ENCODE measurements at regions of chr19 and their contacts with region 1.

Region 1: DNA sequence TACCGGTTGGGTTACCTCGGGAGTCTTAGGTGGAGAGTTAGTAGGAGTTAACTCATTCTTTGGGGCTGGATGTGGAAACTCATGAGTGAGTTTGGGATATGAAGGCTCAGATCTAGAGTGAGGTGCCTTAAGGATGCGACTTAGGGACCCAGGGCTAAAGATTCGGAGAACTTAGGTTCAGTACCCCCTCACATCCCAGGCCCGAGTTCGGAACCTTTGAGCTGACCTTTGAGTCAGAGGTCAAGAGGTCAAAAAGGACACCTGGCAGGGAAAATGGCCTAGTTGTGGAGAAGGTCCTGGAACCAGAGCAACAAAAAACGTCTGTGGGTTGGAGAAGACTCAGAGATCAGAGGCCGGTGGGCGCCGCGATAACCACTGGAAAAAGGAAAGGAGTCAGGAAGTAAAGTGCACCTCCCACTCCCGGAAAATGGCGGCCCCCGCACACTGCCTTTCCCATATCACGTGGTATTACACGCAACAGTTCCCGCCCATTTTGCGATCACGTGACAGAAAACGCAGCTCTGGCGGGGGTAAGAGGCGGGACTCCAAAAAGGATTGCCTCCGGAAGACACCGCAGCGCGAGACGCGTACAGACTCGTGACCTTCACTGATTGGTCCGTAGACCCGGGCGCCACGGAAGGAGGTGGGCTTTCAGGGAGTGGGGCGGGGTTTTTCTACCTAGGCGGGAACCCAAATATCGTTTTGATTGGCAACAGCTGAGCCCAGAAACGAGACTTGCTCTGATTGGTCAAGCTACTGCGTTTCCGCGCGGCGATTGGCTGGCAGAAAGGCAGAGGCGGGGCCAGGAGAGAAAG is at the start of gene ACTMAP:
- DNase-seq: peak; percentile 98 to 100 (median 99)
- ATAC-seq: peak; percentile 87
- H3K4me3 ChIP-seq: peak within 1 kb of the TSS; percentile 75 to 87
- H3K4me3 Mint-ChIP-seq: peak within 1 kb of the TSS; percentile 93
- H3K27ac ChIP-seq: peak within 1 kb of the TSS; percentile 91 to 95
- H3K27ac Mint-ChIP-seq: peak within 1 kb of the TSS; percentile 98
- H3K4me1 ChIP-seq: peaks cover 36% of the 10 kb centered on the region
- H3K4me1 Mint-ChIP-seq: peaks cover 38% of the 10 kb centered on the region
- H3K27me3 ChIP-seq: no peaks in the 10 kb centered on the region
- H3K27me3 Mint-ChIP-seq: no peaks in the 10 kb centered on the region
- CTCF ChIP-seq: no peak
- total RNA-seq, gene ACTMAP: 3.5 to 3.8 TPM

Region 2: DNA sequence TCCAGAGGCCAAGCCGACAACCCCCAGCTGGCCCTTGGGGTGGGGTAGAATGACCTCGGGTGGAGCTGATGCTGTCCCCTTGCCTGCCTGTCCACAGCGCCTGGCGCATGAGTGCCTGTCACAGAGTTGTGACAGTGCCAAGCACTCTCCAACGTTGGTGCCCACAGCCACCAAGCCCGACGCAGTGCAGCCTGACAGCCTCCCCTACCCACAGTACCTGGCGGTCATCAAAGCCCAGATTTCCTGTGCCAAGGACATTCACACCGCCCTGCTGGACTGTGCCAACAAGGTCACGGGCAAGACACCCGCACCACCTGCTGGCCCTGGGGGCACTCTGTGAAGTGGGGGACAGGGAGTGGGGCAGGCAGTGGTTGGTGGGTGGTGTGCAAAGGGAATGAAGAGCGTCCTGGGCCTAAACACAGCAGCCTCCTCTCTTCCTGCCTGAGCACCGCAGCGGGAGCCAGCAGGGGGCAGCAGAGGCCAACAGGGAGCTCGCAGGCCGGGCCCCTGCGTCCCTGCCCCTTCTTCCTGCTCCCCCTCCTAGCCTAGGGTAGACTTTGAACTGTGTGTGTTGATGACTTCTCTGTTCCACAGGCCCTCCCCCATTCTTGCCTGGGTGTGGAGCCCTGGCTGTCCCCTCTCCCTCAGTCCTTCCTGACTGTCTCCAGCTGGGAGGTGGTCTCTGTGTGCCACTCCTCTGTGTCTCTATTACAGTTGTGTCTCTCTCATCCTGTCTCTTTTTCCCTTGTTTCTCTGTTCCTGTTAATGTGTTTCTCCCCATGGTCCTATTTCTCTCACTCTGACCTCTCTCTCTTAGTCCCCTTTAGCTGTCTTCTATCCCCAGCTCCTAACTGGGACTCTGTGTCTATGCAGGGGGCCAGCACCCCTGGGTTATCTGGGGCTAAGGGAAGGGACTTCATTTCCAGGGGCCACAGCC is 1352.6 kb before region 1 on chr19:
- CTCF ChIA-PET with region 1: no interaction called
- POLR2A ChIA-PET with region 1: no interaction called
- intact Hi-C with region 1: loop called in 1 of 2 experiments (anchors 2 kb)
- DNase-seq: peak; percentile 88 to 98 (median 94)
- ATAC-seq: peak; percentile 41
- H3K4me3 ChIP-seq: peak overlapping the region; percentile 12 to 18
- H3K4me3 Mint-ChIP-seq: peak overlapping the region; percentile 71
- H3K27ac ChIP-seq: peak overlapping the region; percentile 33 to 92
- H3K27ac Mint-ChIP-seq: peak overlapping the region; percentile 96
- H3K4me1 ChIP-seq: peaks cover 51% of the 10 kb centered on the region
- H3K4me1 Mint-ChIP-seq: peaks cover 56% of the 10 kb centered on the region
- H3K27me3 ChIP-seq: no peaks in the 10 kb centered on the region
- H3K27me3 Mint-ChIP-seq: no peaks in the 10 kb centered on the region
- CTCF ChIP-seq: peak; percentile 94

Region 3: GRCh38 chr19:40609561-40610395 is 140.5 kb before region 1 on chr19:
- CTCF ChIA-PET with region 1: no interaction called
- POLR2A ChIA-PET with region 1: no interaction called
- intact Hi-C with region 1: no loop called
- DNase-seq: peak; percentile 71 to 90 (median 84)
- ATAC-seq: peak; percentile 35
- H3K4me3 ChIP-seq: peak overlapping the region; percentile 50 to 56
- H3K4me3 Mint-ChIP-seq: peak overlapping the region; percentile 78
- H3K27ac ChIP-seq: peak overlapping the region; percentile 72 to 89
- H3K27ac Mint-ChIP-seq: peak overlapping the region; percentile 94
- H3K4me1 ChIP-seq: peaks cover 44% of the 10 kb centered on the region
- H3K4me1 Mint-ChIP-seq: peaks cover 68% of the 10 kb centered on the region
- H3K27me3 ChIP-seq: no peaks in the 10 kb centered on the region
- H3K27me3 Mint-ChIP-seq: no peaks in the 10 kb centered on the region
- CTCF ChIP-seq: no peak

Region 4: DNA sequence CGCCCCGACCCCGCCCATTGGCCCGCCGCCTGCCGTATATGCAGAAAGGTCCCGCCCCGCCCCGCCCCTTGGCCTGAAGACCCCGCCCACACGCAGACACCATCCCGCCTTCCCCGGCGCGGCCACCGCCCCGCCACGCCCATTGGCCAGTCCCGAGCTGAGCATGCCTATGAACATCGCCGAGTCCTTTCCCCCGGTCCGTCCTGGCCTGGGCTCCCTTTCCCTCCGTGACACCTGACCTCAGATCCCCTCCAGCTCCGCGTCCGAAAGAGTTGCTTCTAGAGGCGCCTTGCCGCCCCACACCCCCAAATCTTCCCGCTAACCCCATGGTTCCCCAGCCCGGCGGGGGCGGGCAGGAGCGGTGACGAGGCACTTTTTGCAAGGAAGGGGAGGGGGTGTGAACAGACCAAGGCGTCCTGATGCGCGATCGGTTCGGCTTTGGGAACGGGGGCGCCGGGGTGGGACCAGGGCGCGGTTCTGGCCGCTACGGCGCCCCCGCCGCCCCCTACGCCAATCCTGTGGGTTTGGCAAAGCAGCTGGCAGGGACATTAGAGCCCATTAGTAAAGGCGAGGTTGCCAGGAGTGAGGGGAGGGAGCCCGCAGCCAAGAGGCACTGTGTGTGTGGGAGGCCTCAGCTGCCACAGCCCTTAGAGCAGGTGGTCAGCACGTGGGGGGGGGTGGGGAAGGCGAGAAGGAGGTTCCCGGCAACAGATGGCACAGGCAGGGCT is 59.4 kb before region 1 on chr19:
- CTCF ChIA-PET with region 1: interaction called, 3 read pairs
- POLR2A ChIA-PET with region 1: interaction called, 4 read pairs
- intact Hi-C with region 1: loop called in 1 of 2 experiments (anchors 1 kb)
- DNase-seq: peak; percentile 67 to 93 (median 85)
- ATAC-seq: peak; percentile 88
- H3K4me3 ChIP-seq: peak overlapping the region; percentile 65 to 76
- H3K4me3 Mint-ChIP-seq: peak overlapping the region; percentile 88
- H3K27ac ChIP-seq: peak overlapping the region in 1 of 2 experiments; percentile 40
- H3K27ac Mint-ChIP-seq: peak overlapping the region; percentile 75
- H3K4me1 ChIP-seq: peaks cover 23% of the 10 kb centered on the region
- H3K4me1 Mint-ChIP-seq: peaks cover 7% of the 10 kb centered on the region
- H3K27me3 ChIP-seq: peaks cover 0 to 3% of the 10 kb centered on the region in 2 experiments
- H3K27me3 Mint-ChIP-seq: no peaks in the 10 kb centered on the region
- CTCF ChIP-seq: no peak

Region 5: GRCh38 chr19:40777937-40778705 is 27.9 kb after region 1 on chr19 and contains the start of gene RAB4B:
- CTCF ChIA-PET with region 1: interaction called, 9 read pairs
- POLR2A ChIA-PET with region 1: interaction called, 45 read pairs
- intact Hi-C with region 1: loop called (anchors 1 kb)
- DNase-seq: peak; percentile 100
- ATAC-seq: peak; percentile 83
- H3K4me3 ChIP-seq: peak within 1 kb of the TSS; percentile 87 to 89
- H3K4me3 Mint-ChIP-seq: peak within 1 kb of the TSS; percentile 92
- H3K27ac ChIP-seq: peak within 1 kb of the TSS; percentile 93 to 98
- H3K27ac Mint-ChIP-seq: peak within 1 kb of the TSS; percentile 95
- H3K4me1 ChIP-seq: peaks cover 26% of the 10 kb centered on the region
- H3K4me1 Mint-ChIP-seq: peaks cover 37% of the 10 kb centered on the region
- H3K27me3 ChIP-seq: no peaks in the 10 kb centered on the region
- H3K27me3 Mint-ChIP-seq: no peaks in the 10 kb centered on the region
- CTCF ChIP-seq: no peak
- total RNA-seq, gene RAB4B: 19.9 to 21.3 TPM

Region 6: DNA sequence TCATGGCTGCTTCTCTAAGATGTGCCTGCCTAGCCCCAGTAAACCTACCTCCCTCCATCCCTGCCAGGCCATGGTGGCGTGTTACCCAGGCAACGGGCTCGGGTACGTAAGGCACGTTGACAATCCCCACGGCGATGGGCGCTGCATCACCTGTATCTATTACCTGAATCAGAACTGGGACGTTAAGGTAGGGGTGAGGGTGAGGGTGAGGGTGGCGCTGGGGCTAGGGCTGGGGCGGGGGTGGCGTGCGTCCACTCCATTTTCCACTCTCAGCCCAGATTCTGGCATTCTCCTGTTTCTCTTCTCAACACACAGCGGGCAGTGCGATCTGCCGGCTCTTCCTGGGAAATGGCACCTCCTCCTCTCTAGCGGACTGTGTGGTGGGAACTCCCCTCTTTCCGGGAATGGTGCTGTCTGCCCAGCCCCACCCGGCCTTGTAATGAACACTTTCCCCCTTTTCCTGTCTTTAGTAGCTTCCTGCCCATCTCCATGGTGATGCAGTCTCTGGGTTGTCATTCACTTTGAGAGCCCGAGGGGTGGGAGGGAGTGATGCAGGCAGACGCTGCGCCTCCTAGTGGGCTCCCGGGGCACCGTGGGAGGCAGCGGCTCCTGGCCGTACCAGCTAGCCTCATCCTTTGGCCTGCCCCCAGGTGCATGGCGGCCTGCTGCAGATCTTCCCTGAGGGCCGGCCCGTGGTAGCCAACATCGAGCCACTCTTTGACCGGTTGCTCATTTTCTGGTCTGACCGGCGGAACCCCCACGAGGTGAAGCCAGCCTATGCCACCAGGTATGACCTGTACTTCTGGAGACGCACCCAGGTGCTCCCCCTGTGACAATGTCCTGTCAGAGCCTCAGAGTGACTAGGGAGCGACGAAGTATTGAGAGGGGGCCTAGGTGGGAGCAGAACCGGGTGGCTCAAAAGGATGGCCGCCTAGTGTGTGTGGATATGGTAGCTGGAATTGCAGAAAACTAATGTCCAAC is 56.5 kb after region 1 on chr19:
- CTCF ChIA-PET with region 1: interaction called, 37 read pairs
- POLR2A ChIA-PET with region 1: interaction called, 8 read pairs
- intact Hi-C with region 1: loop called (anchors 1 to 2 kb)
- DNase-seq: peak; percentile 54 to 95 (median 81)
- ATAC-seq: peak; percentile 48
- H3K4me3 ChIP-seq: peak overlapping the region in 1 of 2 experiments; percentile 35
- H3K4me3 Mint-ChIP-seq: peak overlapping the region; percentile 83
- H3K27ac ChIP-seq: peak overlapping the region; percentile 66 to 88
- H3K27ac Mint-ChIP-seq: peak overlapping the region; percentile 99
- H3K4me1 ChIP-seq: peaks cover 86% of the 10 kb centered on the region
- H3K4me1 Mint-ChIP-seq: peaks cover 87% of the 10 kb centered on the region
- H3K27me3 ChIP-seq: no peaks in the 10 kb centered on the region
- H3K27me3 Mint-ChIP-seq: no peaks in the 10 kb centered on the region
- CTCF ChIP-seq: peak; percentile 87

Region 7: GRCh38 chr19:41397086-41398049 is 647.1 kb after region 1 on chr19 and contains the starts of genes BCKDHA and EXOSC5:
- CTCF ChIA-PET with region 1: no interaction called
- POLR2A ChIA-PET with region 1: no interaction called
- intact Hi-C with region 1: loop called in 1 of 2 experiments (anchors 1 kb)
- DNase-seq: peak; percentile 97 to 100 (median 99)
- ATAC-seq: peak; percentile 97
- H3K4me3 ChIP-seq: peak within 1 kb of the TSS; percentile 84 to 97
- H3K4me3 Mint-ChIP-seq: peak within 1 kb of the TSS; percentile 98
- H3K27ac ChIP-seq: peak within 1 kb of the TSS; percentile 98
- H3K27ac Mint-ChIP-seq: peak within 1 kb of the TSS; percentile 100
- H3K4me1 ChIP-seq: peaks cover 28% of the 10 kb centered on the region
- H3K4me1 Mint-ChIP-seq: peaks cover 47% of the 10 kb centered on the region
- H3K27me3 ChIP-seq: no peaks in the 10 kb centered on the region
- H3K27me3 Mint-ChIP-seq: no peaks in the 10 kb centered on the region
- CTCF ChIP-seq: no peak
- total RNA-seq, gene BCKDHA: 19.4 to 20.5 TPM
- total RNA-seq, gene EXOSC5: 4.1 to 5.5 TPM

Measured in CD8-positive, alpha-beta T cell (primary cell).